Left colon (tissue), 2 donors: ENCODE measurements at regions of chr19 and their contacts with region 1.

Region 1: GRCh38 chr19:10644260-10645007 is 9.7 kb upstream of the ILF3 start:
- DNase-seq: peak; percentile 73 to 87
- ATAC-seq: peak; percentile 86

Region 2: GRCh38 chr19:10587022-10587789 is 57.2 kb before region 1 on chr19 and contains the start of gene AP1M2:
- intact Hi-C with region 1: loop called (anchors 5 kb)
- DNase-seq: peak; percentile 67 to 78
- ATAC-seq: peak; percentile 99
- total RNA-seq, gene AP1M2: 116 to 158 TPM